ENCODE measurements at regions of chr16 and their contacts with region 1.

Region 1: GRCh38 chr16:87636072-87636684 is 33.9 kb downstream of the JPH3 start:
- DNase-seq: peak; percentile 77
- H3K4me3 ChIP-seq: peak overlapping the region; percentile 40
- H3K27ac ChIP-seq: no peak overlapping the region
- H3K4me1 ChIP-seq: peaks cover 4% of the 10 kb centered on the region
- H3K27me3 ChIP-seq: peaks cover 31% of the 10 kb centered on the region
- CTCF ChIP-seq: peak; percentile 50

Region 2: GRCh38 chr16:86563489-86564345 is 1072.5 kb before region 1 on chr16:
- CTCF ChIA-PET with region 1: no interaction called
- POLR2A ChIA-PET with region 1: no interaction called
- intact Hi-C with region 1: loop called (anchors 10 kb)
- DNase-seq: peak; percentile 88
- H3K4me3 ChIP-seq: peak overlapping the region; percentile 16
- H3K27ac ChIP-seq: no peak overlapping the region
- H3K4me1 ChIP-seq: peaks cover 4% of the 10 kb centered on the region
- H3K27me3 ChIP-seq: peaks cover 43% of the 10 kb centered on the region
- CTCF ChIP-seq: peak; percentile 100

Region 3: DNA sequence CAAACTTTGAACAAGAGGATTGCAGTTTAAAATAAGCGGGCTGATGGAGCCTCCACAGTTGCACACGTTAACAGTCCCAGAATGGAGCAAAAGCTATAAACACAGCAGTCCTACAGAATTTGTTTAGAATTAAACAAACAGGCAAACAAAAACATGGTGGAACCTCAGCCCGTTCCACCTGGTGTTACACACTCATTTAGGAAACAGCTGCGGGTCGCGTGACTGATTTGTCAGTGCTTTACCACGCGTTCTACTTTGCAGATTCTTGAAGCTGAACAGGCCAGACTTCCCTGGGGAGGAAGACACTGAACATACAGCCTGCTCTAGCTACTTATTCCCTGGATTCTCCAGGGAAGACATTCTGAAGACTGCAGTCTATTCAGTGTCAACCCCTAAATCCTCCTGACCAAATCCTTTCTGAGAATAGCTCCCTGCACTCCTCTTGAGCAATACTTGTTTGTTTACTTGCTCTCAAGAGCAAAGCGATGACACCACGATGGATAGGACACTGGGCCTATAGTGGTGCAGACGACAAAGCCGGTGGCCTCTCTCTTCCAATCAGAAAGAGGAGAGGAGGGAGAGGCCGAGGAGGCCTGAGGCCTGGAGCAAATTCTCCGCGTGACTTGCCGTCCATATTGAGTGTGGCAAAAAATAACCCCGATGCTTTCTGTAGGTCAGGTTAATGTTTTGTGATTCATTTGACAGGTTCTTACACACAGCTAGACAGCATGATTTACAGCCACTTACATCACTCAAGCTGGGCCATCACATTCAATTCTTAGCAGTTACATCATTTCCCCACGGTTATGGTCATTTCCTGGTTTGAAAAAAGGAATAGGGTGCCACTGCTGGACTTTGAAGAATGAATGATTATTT is 248.0 kb before region 1 on chr16:
- CTCF ChIA-PET with region 1: interaction called, 5 read pairs
- POLR2A ChIA-PET with region 1: no interaction called
- intact Hi-C with region 1: loop called (anchors 10 kb)
- DNase-seq: peak; percentile 98
- H3K4me3 ChIP-seq: peak overlapping the region; percentile 15
- H3K27ac ChIP-seq: peak overlapping the region; percentile 87
- H3K4me1 ChIP-seq: peaks cover 31% of the 10 kb centered on the region
- H3K27me3 ChIP-seq: no peaks in the 10 kb centered on the region
- CTCF ChIP-seq: no peak

Region 4: DNA sequence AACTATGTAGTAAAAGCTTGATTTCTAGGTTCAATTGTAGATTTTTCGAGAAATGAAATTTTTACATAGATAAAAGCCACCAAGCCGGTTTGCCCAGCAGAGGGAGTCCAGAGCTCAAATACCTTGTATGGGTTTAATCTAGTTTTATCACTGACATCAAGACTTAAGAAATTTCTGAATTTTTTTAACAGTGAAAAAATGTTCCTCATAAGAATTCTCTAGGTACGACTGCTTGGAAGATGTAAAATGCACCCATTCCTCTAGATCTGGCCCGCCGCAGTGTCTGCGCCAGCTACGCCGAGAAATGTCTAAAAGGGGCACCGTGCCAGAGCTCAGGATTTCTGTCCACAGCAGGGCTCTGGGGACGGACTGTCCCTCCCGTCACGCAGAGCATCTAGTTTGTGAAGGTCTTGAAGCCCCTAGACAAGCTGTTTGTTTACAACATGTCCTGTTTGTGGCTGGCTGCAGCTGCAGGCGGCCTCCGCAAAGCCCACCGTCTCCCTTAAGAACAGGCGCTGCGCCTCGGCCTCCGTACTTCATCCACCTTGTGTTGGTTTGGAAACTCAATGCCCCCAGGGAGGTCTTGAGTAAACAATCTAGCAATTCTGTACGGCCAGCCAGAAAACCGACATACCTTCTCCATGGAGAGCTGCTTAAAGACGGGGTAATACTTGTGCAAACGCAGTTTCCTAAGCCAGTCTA is 219.2 kb before region 1 on chr16:
- CTCF ChIA-PET with region 1: interaction called, 11 read pairs
- POLR2A ChIA-PET with region 1: no interaction called
- intact Hi-C with region 1: loop called (anchors 5 kb)
- DNase-seq: peak; percentile 58
- H3K4me3 ChIP-seq: no peak overlapping the region
- H3K27ac ChIP-seq: no peak overlapping the region
- H3K4me1 ChIP-seq: no peaks in the 10 kb centered on the region
- H3K27me3 ChIP-seq: no peaks in the 10 kb centered on the region
- CTCF ChIP-seq: peak; percentile 68

Region 5: GRCh38 chr16:87550496-87550961 is 85.6 kb before region 1 on chr16:
- CTCF ChIA-PET with region 1: no interaction called
- POLR2A ChIA-PET with region 1: no interaction called
- intact Hi-C with region 1: loop called (anchors 2 kb)
- DNase-seq: peak; percentile 36
- H3K4me3 ChIP-seq: no peak overlapping the region
- H3K27ac ChIP-seq: no peak overlapping the region
- H3K4me1 ChIP-seq: no peaks in the 10 kb centered on the region
- H3K27me3 ChIP-seq: no peaks in the 10 kb centered on the region
- CTCF ChIP-seq: peak; percentile 96

Region 6: DNA sequence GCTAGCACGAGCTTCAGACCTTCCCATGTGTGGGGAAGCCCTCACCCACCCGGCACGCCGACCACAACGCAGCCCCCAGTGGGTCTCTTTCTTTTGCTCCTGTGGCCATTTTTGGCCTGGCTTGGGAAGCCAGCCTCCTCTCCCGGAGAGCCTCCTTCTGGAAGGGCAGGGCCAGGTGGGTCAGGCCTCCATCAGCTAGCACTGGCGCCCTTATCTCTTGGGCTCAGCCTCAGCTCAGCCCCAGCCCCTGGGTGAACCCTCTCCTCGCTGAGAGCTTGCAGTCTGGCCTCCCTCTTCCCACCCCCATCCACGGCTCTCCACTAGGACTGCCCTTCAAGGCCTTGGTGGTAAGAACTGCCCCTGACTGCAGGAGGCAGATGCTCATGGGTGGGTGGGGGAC is 48.5 kb before region 1 on chr16:
- CTCF ChIA-PET with region 1: interaction called, 4 read pairs
- POLR2A ChIA-PET with region 1: no interaction called
- intact Hi-C with region 1: loop called (anchors 1 kb)
- DNase-seq: no peak
- H3K4me3 ChIP-seq: no peak overlapping the region
- H3K27ac ChIP-seq: no peak overlapping the region
- H3K4me1 ChIP-seq: peaks cover 5% of the 10 kb centered on the region
- H3K27me3 ChIP-seq: peaks cover 4% of the 10 kb centered on the region
- CTCF ChIP-seq: no peak

Region 7: GRCh38 chr16:87793776-87794514 is 157.8 kb after region 1 on chr16:
- CTCF ChIA-PET with region 1: no interaction called
- POLR2A ChIA-PET with region 1: no interaction called
- intact Hi-C with region 1: no loop called
- DNase-seq: peak; percentile 56
- H3K4me3 ChIP-seq: no peak overlapping the region
- H3K27ac ChIP-seq: no peak overlapping the region
- H3K4me1 ChIP-seq: peaks cover 15% of the 10 kb centered on the region
- H3K27me3 ChIP-seq: no peaks in the 10 kb centered on the region
- CTCF ChIP-seq: no peak

Measured in A673 (cell line).